Left cardiac atrium (tissue), 4 donors: ENCODE measurements at regions of chr6 and their contacts with region 1.

Region 1: DNA sequence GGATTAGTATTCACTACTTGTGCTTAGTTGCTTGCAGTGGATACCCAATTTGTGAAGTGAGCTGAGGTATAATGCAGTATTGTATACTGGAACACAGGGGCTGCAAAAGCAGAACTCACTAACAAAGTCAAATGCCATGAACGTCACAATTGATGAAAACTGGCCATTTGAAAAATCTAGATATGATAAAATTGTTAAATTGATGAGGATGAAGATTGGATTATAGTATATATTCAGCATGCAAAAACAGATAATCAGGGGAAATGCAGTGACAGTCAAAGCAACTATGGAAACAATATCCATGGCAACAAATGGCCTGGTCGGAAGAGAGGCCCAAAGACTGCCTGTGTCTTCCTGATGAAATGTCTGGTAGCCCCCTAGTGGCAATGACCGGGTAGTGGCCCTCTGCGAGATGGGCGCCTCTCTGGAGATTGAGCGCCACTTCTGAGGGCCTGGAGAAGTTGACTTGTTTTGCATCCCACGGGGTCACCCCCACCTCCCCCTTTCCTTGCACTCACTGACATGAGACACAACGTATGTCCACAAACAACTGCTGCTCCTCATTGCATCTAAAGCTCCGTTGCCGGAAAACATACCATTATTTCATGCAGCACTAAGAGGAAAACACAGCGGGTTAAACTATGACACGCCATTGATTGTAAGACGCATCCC is 43.6 kb downstream of the C6orf15 start:
- DNase-seq: peak; percentile 75
- ATAC-seq: peak; percentile 83 to 87

Region 2: GRCh38 chr6:30915591-30915946 is 153.2 kb before region 1 on chr6:
- intact Hi-C with region 1: loop called in 1 of 2 experiments (anchors 1 kb)
- DNase-seq: no peak
- ATAC-seq: peak in 1 of 2 donors; percentile 48

Region 3: GRCh38 chr6:31031095-31031494 is 37.7 kb before region 1 on chr6:
- intact Hi-C with region 1: no loop called
- DNase-seq: no peak
- ATAC-seq: no peak

Region 4: GRCh38 chr6:31143148-31143547 is 74.3 kb after region 1 on chr6:
- intact Hi-C with region 1: no loop called
- DNase-seq: peak; percentile 81
- ATAC-seq: peak; percentile 55 to 90